ENCODE measurements at regions of chr12 and their contacts with region 1.

Region 1: DNA sequence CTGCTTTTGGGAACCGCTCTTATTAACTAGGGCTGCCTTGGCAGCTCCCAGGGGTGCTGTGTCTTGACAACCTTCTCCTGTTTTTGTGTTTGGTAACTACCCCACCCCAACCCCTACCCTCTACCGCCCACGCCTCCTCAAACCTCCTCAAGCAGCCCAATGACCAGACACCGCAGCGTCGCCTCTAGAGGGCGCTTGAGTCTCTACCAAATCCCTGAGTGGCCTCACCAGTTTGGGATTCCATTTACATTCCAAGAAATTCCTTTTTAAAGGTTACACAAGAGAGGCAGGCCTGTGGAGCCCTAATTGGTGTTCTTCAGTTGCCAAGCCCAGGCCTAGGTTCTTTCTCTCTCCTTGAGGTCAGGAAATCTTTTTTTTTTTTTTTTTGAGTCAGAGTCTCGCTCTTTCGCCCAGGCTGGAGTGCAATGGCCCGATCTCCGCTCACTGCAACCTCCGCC is 72.3 kb upstream of the USP44 start:
- DNase-seq: no peak
- ATAC-seq: peak; percentile 87
- H3K4me3 ChIP-seq: no peak overlapping the region
- H3K27ac ChIP-seq: no peak overlapping the region
- H3K4me1 ChIP-seq: no peaks in the 10 kb centered on the region
- H3K27me3 ChIP-seq: no peaks in the 10 kb centered on the region
- CTCF ChIP-seq: peak; percentile 55 to 81 (median 79)
- EP300 ChIP-seq: no peak
- POLR2A ChIP-seq: no peak
- RAD21 ChIP-seq: peak; percentile 74

Region 2: DNA sequence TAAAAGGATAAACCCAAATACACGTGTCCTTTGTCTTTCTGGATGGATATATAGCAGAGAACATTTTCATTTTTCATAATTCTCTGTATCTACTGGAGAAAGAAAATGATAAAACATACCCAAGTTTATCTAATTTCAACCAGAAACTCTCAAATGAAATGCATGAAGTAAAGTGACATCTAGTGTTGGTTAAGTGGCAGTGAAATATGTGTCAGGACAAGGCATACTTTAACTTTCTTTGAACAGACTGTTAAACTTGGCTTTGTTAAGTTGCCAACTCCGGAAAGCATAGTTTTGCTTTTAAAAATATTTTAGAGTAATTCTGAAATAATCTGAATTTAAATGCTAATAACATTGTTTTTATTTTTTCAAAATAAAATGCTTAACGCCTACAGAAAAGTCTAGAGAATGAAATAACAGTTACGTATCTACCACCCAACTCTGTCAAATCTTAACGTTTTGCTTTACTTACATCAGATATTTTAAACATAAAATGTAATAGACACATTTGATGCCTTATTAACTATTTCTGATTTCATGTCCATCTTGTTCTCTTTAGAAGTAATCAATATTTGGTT is 192.1 kb after region 1 on chr12:
- CTCF ChIA-PET with region 1: interaction called, 7 read pairs
- POLR2A ChIA-PET with region 1: no interaction called
- RAD21 ChIA-PET with region 1: interaction called, 3 read pairs
- SMC1A ChIA-PET with region 1: interaction called, 3 read pairs
- in situ Hi-C with region 1: loop called (anchors 10 kb)
- intact Hi-C with region 1: loop called (anchors 1 kb)
- DNase-seq: no peak
- ATAC-seq: peak; percentile 56
- H3K4me3 ChIP-seq: no peak overlapping the region
- H3K27ac ChIP-seq: no peak overlapping the region
- H3K4me1 ChIP-seq: no peaks in the 10 kb centered on the region
- H3K27me3 ChIP-seq: peaks cover 0 to 2% of the 10 kb centered on the region in 2 experiments; a peak in 3 of 4 replicates
- CTCF ChIP-seq: peak; percentile 44 to 63 (median 59); a peak in 5 of 6 replicates
- EP300 ChIP-seq: no peak
- POLR2A ChIP-seq: no peak
- RAD21 ChIP-seq: peak; percentile 83

Measured in GM12878 (cell line).